A673 (cell line): ENCODE measurements at regions of chr15 and their contacts with region 1.

Region 1: DNA sequence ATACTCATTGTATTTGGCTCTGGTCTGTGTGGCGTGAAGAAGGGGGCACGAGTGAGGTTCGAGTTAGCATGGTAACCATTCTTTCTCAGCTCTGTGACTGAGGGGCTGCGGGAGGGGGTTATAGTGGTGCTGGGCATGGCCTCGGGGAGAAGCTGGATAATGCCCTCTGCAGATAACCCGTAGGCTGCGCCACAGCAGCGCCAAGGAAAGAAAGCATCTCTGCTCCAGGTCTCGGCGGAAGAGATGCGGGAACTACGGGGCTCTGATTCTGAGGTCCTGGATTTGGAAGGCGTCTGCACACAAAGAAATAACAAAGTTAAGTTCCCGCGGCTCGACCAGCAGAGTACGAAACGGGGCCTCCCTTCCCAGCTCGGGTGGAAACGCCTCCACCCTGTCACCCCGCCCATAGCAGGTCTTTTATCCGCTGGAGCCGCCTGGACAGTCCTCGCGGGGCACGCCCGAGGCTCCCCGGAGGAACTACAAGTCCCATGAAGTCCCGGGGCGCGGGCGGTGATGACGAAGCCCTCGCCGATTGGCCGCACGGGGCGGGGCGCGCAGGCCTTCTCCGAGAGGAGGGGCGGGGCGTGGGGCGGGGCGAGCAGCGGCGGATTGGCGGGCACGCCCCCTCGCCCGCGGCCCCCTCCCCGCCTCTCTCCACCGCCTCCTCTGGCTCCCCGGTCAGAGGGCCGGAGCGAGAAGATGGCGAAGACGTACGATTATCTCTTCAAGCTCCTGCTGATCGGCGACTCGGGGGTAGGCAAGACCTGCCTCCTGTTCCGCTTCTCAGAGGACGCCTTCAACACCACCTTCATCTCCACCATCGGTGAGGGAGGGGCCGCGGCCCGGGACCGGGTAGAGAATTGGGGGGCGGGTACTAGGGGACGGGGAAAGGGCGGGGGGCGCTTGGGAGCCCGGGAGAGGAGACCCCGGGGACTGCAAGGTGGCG is at the start of gene RAB8B:
- DNase-seq: peak; percentile 98
- H3K4me3 ChIP-seq: peak within 1 kb of the TSS; percentile 94
- H3K27ac ChIP-seq: peak within 1 kb of the TSS; percentile 80
- H3K4me1 ChIP-seq: peaks cover 16% of the 10 kb centered on the region
- H3K27me3 ChIP-seq: no peaks in the 10 kb centered on the region
- CTCF ChIP-seq: no peak
- total RNA-seq, gene RAB8B: 29.1 and 34.3 TPM in 2 replicates

Region 2: DNA sequence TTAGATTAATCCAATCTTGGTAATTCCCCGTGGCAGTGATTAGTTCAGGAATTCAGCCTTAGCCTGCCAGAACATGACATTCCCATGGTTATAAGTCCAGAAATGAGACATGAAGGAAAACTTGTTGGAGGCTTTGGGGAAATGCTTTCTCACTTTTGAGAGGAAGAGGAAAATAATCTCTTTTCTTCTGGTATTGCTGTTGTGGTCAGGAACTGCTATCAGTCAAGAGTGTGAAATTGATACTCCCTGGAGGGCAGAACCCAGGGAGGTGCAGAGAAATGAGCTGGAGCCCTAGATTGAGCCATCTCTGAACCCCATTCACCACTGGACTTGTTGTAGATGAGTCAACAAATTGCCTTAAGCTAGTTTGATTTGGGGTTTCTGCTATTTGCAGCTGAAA is 49.6 kb after region 1 on chr15:
- CTCF ChIA-PET with region 1: no interaction called
- POLR2A ChIA-PET with region 1: no interaction called
- intact Hi-C with region 1: no loop called
- DNase-seq: peak; percentile 79
- H3K4me3 ChIP-seq: no peak overlapping the region
- H3K27ac ChIP-seq: peak overlapping the region; percentile 62
- H3K4me1 ChIP-seq: peaks cover 48% of the 10 kb centered on the region
- H3K27me3 ChIP-seq: no peaks in the 10 kb centered on the region
- CTCF ChIP-seq: no peak

Region 3: GRCh38 chr15:63256433-63257274 is 67.5 kb after region 1 on chr15:
- CTCF ChIA-PET with region 1: no interaction called
- POLR2A ChIA-PET with region 1: no interaction called
- intact Hi-C with region 1: loop called (anchors 5 kb)
- DNase-seq: peak; percentile 90
- H3K4me3 ChIP-seq: no peak overlapping the region
- H3K27ac ChIP-seq: peak overlapping the region; percentile 88
- H3K4me1 ChIP-seq: peaks cover 27% of the 10 kb centered on the region
- H3K27me3 ChIP-seq: no peaks in the 10 kb centered on the region
- CTCF ChIP-seq: no peak

Region 4: GRCh38 chr15:63277038-63277892 is 88.1 kb after region 1 on chr15 and contains the start of gene APH1B:
- CTCF ChIA-PET with region 1: no interaction called
- POLR2A ChIA-PET with region 1: no interaction called
- intact Hi-C with region 1: loop called (anchors 5 kb)
- DNase-seq: peak; percentile 83
- H3K4me3 ChIP-seq: peak within 1 kb of the TSS; percentile 67
- H3K27ac ChIP-seq: peak within 1 kb of the TSS; percentile 69
- H3K4me1 ChIP-seq: peaks cover 13% of the 10 kb centered on the region
- H3K27me3 ChIP-seq: no peaks in the 10 kb centered on the region
- CTCF ChIP-seq: no peak
- total RNA-seq, gene APH1B: 6.2 and 8.1 TPM in 2 replicates

Region 5: DNA sequence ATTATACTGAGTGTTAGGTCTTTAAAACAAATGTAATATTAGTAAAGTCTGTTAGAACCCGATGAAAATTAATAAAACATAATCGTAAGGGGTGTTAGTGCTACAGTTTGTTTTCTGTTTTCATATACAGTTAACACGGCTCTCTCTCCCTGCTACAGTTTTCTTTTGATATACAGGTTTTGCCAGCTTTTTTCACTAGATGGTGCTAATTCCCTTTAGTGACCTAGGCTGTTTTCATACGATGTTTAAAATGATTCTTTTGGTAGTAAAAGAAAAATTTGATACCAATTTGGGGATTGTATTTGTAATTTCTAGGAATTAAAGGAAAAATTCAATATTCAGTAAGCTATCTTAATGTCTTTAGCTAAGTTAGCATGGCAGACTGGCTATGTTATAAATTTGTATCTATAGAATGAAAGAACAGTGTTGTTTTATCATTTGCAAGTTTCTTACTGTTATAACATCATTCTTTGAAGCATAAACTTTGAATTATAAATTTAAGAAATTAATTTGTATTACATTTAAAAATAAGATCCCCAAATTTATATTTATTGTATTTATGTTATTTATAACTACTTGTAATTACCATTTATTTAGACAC is 99.7 kb after region 1 on chr15:
- CTCF ChIA-PET with region 1: no interaction called
- POLR2A ChIA-PET with region 1: no interaction called
- intact Hi-C with region 1: no loop called
- DNase-seq: peak; percentile 73
- H3K4me3 ChIP-seq: no peak overlapping the region
- H3K27ac ChIP-seq: no peak overlapping the region
- H3K4me1 ChIP-seq: peaks cover 19% of the 10 kb centered on the region
- H3K27me3 ChIP-seq: no peaks in the 10 kb centered on the region
- CTCF ChIP-seq: peak; percentile 85